IMR-90 (cell line): ENCODE measurements at regions of chr17 and their contacts with region 1.

Region 1: GRCh38 chr17:45640141-45640850 is 143.8 kb upstream of the CRHR1 start:
- DNase-seq: peak; percentile 76
- ATAC-seq: peak; percentile 98
- H3K4me3 ChIP-seq: no peak overlapping the region
- H3K27ac ChIP-seq: no peak overlapping the region
- H3K4me1 ChIP-seq: no peaks in the 10 kb centered on the region
- H3K27me3 ChIP-seq: no peaks in the 10 kb centered on the region; the same call in 1 of the 2 replicates
- CTCF ChIP-seq: peak; percentile 97
- POLR2A ChIP-seq: no peak
- RAD21 ChIP-seq: peak; percentile 94

Region 2: DNA sequence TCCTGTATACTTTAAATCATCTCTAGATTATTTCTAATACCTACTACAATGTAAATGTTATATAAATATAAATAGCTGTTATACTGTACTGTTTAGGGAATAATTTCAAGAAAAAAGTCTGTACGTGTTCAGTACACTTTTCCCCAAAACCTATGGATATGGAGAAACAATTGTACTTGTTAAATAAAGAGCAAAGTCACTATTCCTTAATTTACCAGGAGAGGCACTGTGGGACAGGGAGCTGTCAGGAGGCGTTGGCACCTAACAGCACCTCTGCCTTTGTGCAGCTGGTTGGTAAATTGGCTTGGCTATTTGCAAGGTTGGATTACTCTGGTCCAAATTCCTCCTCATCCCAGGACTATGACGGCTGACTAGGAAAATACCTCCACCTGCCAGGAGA is 171.8 kb after region 1 on chr17:
- CTCF ChIA-PET with region 1: no interaction called
- POLR2A ChIA-PET with region 1: no interaction called
- dilution Hi-C with region 1: no loop called
- in situ Hi-C with region 1: no loop called
- intact Hi-C with region 1: no loop called
- DNase-seq: no peak
- ATAC-seq: no peak
- H3K4me3 ChIP-seq: no peak overlapping the region
- H3K27ac ChIP-seq: no peak overlapping the region
- H3K4me1 ChIP-seq: no peaks in the 10 kb centered on the region
- H3K27me3 ChIP-seq: peaks cover 22% of the 10 kb centered on the region
- CTCF ChIP-seq: no peak
- POLR2A ChIP-seq: no peak
- RAD21 ChIP-seq: no peak

Region 3: GRCh38 chr17:45828628-45829027 is 188.3 kb after region 1 on chr17:
- CTCF ChIA-PET with region 1: interaction called, 11 read pairs
- POLR2A ChIA-PET with region 1: no interaction called
- dilution Hi-C with region 1: no loop called
- in situ Hi-C with region 1: loop called (anchors 5 kb)
- intact Hi-C with region 1: loop called (anchors 1 kb)
- DNase-seq: no peak
- ATAC-seq: no peak
- H3K4me3 ChIP-seq: no peak overlapping the region
- H3K27ac ChIP-seq: no peak overlapping the region
- H3K4me1 ChIP-seq: no peaks in the 10 kb centered on the region
- H3K27me3 ChIP-seq: peaks cover 30% of the 10 kb centered on the region
- CTCF ChIP-seq: no peak
- POLR2A ChIP-seq: no peak
- RAD21 ChIP-seq: no peak

Region 4: GRCh38 chr17:45834471-45835396 is 194.4 kb after region 1 on chr17:
- CTCF ChIA-PET with region 1: interaction called, 11 read pairs
- POLR2A ChIA-PET with region 1: no interaction called
- dilution Hi-C with region 1: no loop called
- in situ Hi-C with region 1: loop called (anchors 5 kb)
- intact Hi-C with region 1: loop called (anchors 1 kb)
- DNase-seq: no peak
- ATAC-seq: no peak
- H3K4me3 ChIP-seq: no peak overlapping the region
- H3K27ac ChIP-seq: no peak overlapping the region
- H3K4me1 ChIP-seq: no peaks in the 10 kb centered on the region
- H3K27me3 ChIP-seq: peaks cover 15% of the 10 kb centered on the region; the same call in 1 of the 2 replicates
- CTCF ChIP-seq: no peak
- POLR2A ChIP-seq: no peak
- RAD21 ChIP-seq: no peak

Region 5: DNA sequence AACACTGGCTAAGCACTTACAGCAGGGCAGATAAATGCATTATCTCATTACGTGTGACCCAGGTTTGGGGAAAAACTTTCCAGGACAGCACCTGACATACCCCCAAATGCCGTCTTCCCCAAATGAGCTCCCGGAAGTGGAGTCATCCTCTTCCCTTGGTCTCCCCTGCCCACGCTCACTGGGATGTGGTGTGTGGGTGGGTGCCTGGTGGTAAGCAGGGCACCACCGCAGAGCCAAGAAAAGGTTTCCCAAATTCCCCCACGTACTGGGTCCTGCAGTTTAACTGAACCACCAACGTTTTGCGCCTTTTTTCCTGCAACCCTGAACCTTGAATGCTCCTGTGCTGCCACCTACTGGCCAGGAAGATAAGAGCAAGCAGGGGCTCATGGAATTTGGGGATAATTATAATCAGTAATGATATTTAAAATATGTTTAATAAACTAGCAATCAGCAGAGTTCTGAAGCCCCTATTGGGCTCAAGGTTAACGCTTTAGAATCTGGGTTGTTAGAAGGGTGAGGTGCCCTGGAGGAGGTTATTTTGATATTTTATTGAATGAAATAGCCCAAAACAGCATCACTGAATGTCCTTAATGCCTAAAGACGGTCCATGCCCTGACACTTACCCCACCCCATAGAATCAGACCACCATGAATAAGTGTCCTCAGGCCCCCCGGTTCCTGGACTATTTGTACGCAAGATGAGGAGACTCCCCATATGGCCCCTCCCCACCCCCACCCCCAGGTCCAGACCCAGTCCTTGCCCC is 212.4 kb after region 1 on chr17:
- CTCF ChIA-PET with region 1: interaction called, 4 read pairs
- POLR2A ChIA-PET with region 1: interaction called, 4 read pairs
- dilution Hi-C with region 1: loop called (anchors 25 kb)
- in situ Hi-C with region 1: no loop called
- intact Hi-C with region 1: loop called (anchors 1 kb)
- DNase-seq: peak; percentile 55
- ATAC-seq: peak; percentile 82
- H3K4me3 ChIP-seq: no peak overlapping the region
- H3K27ac ChIP-seq: no peak overlapping the region
- H3K4me1 ChIP-seq: no peaks in the 10 kb centered on the region
- H3K27me3 ChIP-seq: peaks cover 7% of the 10 kb centered on the region; the same call in 1 of the 2 replicates
- CTCF ChIP-seq: peak; percentile 89
- POLR2A ChIP-seq: no peak
- RAD21 ChIP-seq: peak; percentile 74

Region 6: DNA sequence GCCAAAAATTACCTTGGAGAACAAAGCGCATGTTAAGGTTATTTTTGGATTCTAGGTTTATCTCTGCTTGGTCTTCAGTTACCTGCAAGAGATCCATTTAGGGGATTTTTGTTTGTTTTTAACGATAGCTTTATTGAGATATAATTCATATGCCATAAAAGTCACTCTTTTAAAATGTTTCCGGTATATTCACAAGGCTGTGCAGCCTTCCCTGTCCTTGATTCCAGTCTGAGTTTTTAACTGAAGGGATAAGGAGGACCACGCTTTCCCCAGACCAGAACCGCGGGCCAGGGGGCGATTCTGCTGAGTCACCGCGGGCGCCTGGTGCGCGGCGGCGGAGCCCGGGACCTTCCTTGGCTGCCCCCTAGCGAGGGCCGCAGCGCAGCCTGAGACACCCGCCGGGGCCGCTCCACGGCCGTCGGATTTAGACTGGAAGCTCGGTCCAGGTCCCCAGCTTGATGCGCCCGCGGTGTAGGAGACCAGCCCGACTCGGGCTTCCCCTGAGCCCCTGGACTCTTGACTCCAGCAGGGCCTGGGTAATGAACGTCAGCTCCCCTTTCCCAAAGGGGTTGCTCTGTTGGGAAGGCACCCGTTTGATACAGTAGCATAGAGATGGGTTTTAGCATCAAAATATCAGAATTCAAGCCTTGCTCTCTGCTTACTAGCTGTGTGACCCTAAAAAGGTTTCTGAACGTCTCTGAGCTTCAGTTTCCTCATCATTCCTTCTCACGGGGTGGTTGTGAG is 308.8 kb after region 1 on chr17:
- CTCF ChIA-PET with region 1: no interaction called
- POLR2A ChIA-PET with region 1: no interaction called
- dilution Hi-C with region 1: no loop called
- in situ Hi-C with region 1: no loop called
- intact Hi-C with region 1: loop called (anchors 5 kb)
- DNase-seq: peak; percentile 49
- ATAC-seq: peak; percentile 99
- H3K4me3 ChIP-seq: no peak overlapping the region; the same call in 1 of the 2 replicates
- H3K27ac ChIP-seq: no peak overlapping the region
- H3K4me1 ChIP-seq: no peaks in the 10 kb centered on the region
- H3K27me3 ChIP-seq: peaks cover 45% of the 10 kb centered on the region
- CTCF ChIP-seq: peak; percentile 80
- POLR2A ChIP-seq: no peak
- RAD21 ChIP-seq: peak; percentile 51